MCF 10A (cell line): ENCODE measurements at regions of chr5 and their contacts with region 1.

Region 1: GRCh38 chr5:74919487-74919886 is 53.3 kb upstream of the FAM169A start:
- DNase-seq: peak; percentile 58
- H3K4me3 Mint-ChIP-seq: no peak overlapping the region
- H3K27ac Mint-ChIP-seq: no peak overlapping the region
- H3K4me1 Mint-ChIP-seq: peaks cover 7% of the 10 kb centered on the region
- H3K27me3 Mint-ChIP-seq: peaks cover 6% of the 10 kb centered on the region
- CTCF ChIP-seq: peak; percentile 56

Region 2: DNA sequence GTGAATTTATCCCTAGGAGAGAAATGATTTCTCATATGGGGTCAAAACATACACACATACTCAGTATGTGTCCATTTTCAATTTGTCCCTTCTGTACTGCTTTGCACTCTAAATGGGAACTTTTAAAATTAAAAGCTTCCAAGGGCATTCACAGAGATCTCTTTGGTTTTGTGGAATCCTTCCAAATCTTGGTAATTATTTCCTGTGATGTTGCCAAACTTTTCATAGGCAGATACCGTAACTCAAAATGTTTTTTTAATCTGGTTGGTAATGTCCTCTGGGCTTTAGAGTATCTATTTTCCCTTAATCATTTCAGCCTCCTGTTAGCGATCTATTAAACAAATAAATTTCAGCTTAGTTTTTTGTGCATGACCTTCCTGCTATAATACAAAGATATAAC is 1011.1 kb before region 1 on chr5:
- CTCF ChIA-PET with region 1: no interaction called
- POLR2A ChIA-PET with region 1: no interaction called
- intact Hi-C with region 1: loop called (anchors 5 kb)
- DNase-seq: peak; percentile 32
- H3K4me3 Mint-ChIP-seq: no peak overlapping the region
- H3K27ac Mint-ChIP-seq: no peak overlapping the region
- H3K4me1 Mint-ChIP-seq: no peaks in the 10 kb centered on the region
- H3K27me3 Mint-ChIP-seq: no peaks in the 10 kb centered on the region
- CTCF ChIP-seq: no peak

Region 3: DNA sequence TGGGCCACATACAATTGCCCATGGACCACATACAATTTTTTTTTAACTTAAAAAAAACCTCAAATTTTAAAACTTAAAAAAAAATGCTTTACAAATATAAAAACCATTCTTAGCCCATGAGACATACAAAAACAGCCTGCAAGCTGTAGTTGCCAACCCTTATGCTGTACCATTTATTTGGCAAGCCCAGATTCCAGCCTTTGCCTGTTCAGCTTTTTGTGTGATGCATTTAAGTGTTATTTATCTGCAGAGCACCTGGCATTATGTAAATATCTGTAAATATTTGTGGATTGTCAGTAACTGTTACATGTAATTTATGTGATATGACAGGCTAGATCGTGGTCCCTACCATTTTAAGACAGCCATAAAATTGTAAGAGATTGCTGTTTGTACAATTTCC is 201.9 kb before region 1 on chr5:
- CTCF ChIA-PET with region 1: interaction called, 7 read pairs
- POLR2A ChIA-PET with region 1: interaction called, 3 read pairs
- intact Hi-C with region 1: loop called (anchors 1 kb)
- DNase-seq: no peak
- H3K4me3 Mint-ChIP-seq: no peak overlapping the region
- H3K27ac Mint-ChIP-seq: no peak overlapping the region
- H3K4me1 Mint-ChIP-seq: no peaks in the 10 kb centered on the region
- H3K27me3 Mint-ChIP-seq: no peaks in the 10 kb centered on the region
- CTCF ChIP-seq: no peak

Region 4: DNA sequence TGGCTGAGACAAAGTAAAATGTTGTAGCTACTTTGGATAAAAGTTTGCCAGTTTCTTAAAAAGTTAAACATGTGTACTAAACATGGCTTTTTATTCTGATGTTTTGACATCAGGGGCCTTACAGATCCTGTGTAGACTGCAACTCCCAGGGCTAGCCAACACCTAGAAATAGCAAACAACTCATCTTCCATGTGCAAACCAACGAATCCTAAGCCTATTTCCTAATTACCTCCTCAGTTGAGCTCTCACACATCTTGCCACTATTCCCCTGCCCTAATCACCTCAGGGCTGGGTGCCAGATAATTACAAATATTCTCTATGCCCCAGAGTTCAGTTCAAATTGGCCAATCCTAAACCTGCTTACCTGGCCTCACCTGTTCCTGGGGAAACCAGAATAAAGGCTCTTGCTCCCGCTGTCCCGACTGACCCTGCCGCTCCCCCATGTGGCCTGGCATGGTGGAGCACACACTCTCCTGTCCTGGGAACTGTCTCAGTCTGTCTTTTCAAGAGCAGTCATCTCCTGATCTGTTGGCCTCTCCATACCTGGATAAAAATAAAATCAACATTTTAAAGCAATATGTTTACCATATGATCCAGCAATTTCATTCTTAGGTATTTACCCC is 16.2 kb before region 1 on chr5:
- CTCF ChIA-PET with region 1: interaction called, 11 read pairs
- POLR2A ChIA-PET with region 1: no interaction called
- intact Hi-C with region 1: no loop called
- DNase-seq: peak; percentile 83
- H3K4me3 Mint-ChIP-seq: no peak overlapping the region
- H3K27ac Mint-ChIP-seq: no peak overlapping the region
- H3K4me1 Mint-ChIP-seq: no peaks in the 10 kb centered on the region
- H3K27me3 Mint-ChIP-seq: no peaks in the 10 kb centered on the region
- CTCF ChIP-seq: peak; percentile 64